ENCODE measurements at regions of chr5 and their contacts with region 1.

Region 1: DNA sequence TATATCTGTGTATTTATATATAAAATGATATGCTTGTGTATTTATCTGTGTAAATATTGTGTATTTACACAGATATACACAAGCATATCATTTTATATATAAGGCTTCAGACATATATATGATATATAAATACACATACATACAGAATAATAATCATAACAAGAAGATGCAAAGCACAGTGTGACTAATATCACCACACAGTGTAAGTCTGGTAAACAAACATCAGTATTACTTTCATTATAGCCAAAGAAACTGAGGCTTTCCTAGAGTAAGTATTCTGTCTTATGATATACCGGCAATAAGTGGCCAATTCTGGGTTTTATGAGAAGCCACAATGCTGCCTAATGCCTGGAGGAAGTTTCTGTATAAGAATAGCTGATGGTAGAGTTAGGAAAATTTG is 29.9 kb upstream of the RAPGEF6 start:
- DNase-seq: no peak
- H3K27ac ChIP-seq: no peak overlapping the region
- CTCF ChIP-seq: no peak

Region 2: DNA sequence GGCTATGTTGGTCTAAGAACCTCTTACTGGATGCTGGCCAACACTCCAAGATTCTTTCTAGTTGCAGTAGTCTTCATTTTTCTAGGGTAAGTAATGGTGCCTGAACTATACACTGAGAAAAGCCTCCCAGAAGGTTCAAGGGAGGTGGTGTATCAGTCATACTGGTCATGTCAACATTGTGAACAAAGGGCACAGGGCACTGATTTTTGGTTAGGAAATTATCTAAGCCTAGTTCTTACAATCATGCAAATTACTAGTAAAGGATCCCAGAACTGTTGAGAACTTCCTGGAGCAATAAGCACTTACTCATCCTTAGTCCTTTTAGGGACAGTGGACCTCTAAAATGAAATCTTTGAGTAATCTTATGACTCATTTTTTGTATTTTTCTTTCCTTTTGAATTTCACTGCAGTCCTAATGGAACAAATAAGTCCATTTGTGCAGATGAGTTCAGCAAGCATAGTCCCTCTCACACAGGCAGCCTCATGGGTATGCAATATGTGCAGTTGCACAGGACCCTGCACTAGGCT is 422.1 kb before region 1 on chr5:
- CTCF ChIA-PET with region 1: no interaction called
- POLR2A ChIA-PET with region 1: no interaction called
- DNase-seq: peak; percentile 53
- H3K27ac ChIP-seq: peak overlapping the region; percentile 49
- CTCF ChIP-seq: no peak

Region 3: GRCh38 chr5:131296213-131296672 is 368.7 kb before region 1 on chr5:
- CTCF ChIA-PET with region 1: no interaction called
- POLR2A ChIA-PET with region 1: interaction called, 17 read pairs
- DNase-seq: no peak
- H3K27ac ChIP-seq: no peak overlapping the region
- CTCF ChIP-seq: no peak

Region 4: GRCh38 chr5:132495667-132496190 is 830.8 kb after region 1 on chr5:
- CTCF ChIA-PET with region 1: no interaction called
- POLR2A ChIA-PET with region 1: interaction called, 18 read pairs
- DNase-seq: peak; percentile 83
- H3K27ac ChIP-seq: peak overlapping the region; percentile 95
- CTCF ChIP-seq: no peak

Measured in RWPE1 (cell line).